MCF 10A (cell line): ENCODE measurements at regions of chr11 and their contacts with region 1.

Region 1: GRCh38 chr11:68297812-68298658 is 14.4 kb upstream of the LRP5 start:
- DNase-seq: peak; percentile 71
- H3K4me3 Mint-ChIP-seq: no peak overlapping the region
- H3K27ac Mint-ChIP-seq: no peak overlapping the region
- H3K4me1 Mint-ChIP-seq: peaks cover 13% of the 10 kb centered on the region
- H3K27me3 Mint-ChIP-seq: no peaks in the 10 kb centered on the region
- CTCF ChIP-seq: peak; percentile 98

Region 2: DNA sequence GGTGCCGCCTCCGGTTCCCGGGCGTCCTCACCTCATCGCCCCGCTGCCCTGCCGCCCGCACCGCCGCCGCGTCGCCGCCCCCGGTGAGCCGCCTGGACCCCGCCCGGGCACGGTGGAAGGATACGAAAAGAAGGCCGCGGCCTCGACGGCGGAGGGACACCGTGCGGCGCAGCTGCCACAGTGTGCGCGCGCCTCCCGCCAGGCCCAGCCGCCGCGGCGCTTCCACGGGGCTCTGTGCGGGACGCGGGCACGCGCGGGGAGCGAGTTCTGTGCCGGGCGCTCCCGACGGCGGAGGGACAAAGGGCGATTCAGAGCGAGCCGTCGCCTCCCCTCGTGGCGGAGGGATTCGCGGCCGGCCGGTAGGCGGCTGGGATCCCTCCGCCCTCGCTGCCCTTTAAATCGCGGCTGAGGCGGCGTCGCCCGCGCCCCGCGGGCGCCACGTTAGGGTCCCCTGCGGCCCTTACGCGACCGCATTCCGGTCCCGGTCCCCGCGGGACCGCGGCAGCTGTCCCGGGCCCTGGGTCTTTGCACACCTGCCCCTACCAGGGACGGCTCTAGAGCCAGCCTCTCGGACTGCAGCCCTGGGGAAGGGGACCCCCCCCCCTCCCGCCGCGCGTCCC is 84.4 kb before region 1 on chr11:
- CTCF ChIA-PET with region 1: interaction called, 8 read pairs
- POLR2A ChIA-PET with region 1: interaction called, 4 read pairs
- intact Hi-C with region 1: loop called (anchors 1 kb)
- DNase-seq: peak; percentile 81
- H3K4me3 Mint-ChIP-seq: peak overlapping the region; percentile 91
- H3K27ac Mint-ChIP-seq: peak overlapping the region; percentile 84
- H3K4me1 Mint-ChIP-seq: peaks cover 36% of the 10 kb centered on the region
- H3K27me3 Mint-ChIP-seq: peaks cover 11% of the 10 kb centered on the region
- CTCF ChIP-seq: no peak

Region 3: GRCh38 chr11:68257475-68258362 is 40.3 kb before region 1 on chr11:
- CTCF ChIA-PET with region 1: interaction called, 150 read pairs
- POLR2A ChIA-PET with region 1: interaction called, 8 read pairs
- intact Hi-C with region 1: loop called (anchors 1 kb)
- DNase-seq: peak; percentile 93
- H3K4me3 Mint-ChIP-seq: no peak overlapping the region
- H3K27ac Mint-ChIP-seq: no peak overlapping the region
- H3K4me1 Mint-ChIP-seq: no peaks in the 10 kb centered on the region
- H3K27me3 Mint-ChIP-seq: no peaks in the 10 kb centered on the region
- CTCF ChIP-seq: peak; percentile 88

Region 4: GRCh38 chr11:68271781-68272608 is 26.0 kb before region 1 on chr11 and contains the start of gene C11orf24:
- CTCF ChIA-PET with region 1: interaction called, 68 read pairs
- POLR2A ChIA-PET with region 1: interaction called, 18 read pairs
- intact Hi-C with region 1: loop called (anchors 1 kb)
- DNase-seq: peak; percentile 92
- H3K4me3 Mint-ChIP-seq: peak within 1 kb of the TSS; percentile 88
- H3K27ac Mint-ChIP-seq: peak within 1 kb of the TSS; percentile 95
- H3K4me1 Mint-ChIP-seq: peaks cover 17% of the 10 kb centered on the region
- H3K27me3 Mint-ChIP-seq: no peaks in the 10 kb centered on the region
- CTCF ChIP-seq: no peak
- total RNA-seq, gene C11orf24: 58.3 and 69.2 TPM in 2 replicates

Region 5: GRCh38 chr11:68312117-68312779 is 14.2 kb after region 1 on chr11 and contains the start of gene LRP5:
- CTCF ChIA-PET with region 1: interaction called, 15 read pairs
- POLR2A ChIA-PET with region 1: interaction called, 8 read pairs
- intact Hi-C with region 1: no loop called
- DNase-seq: no peak
- H3K4me3 Mint-ChIP-seq: peak within 1 kb of the TSS; percentile 87
- H3K27ac Mint-ChIP-seq: peak within 1 kb of the TSS; percentile 88
- H3K4me1 Mint-ChIP-seq: peaks cover 40% of the 10 kb centered on the region
- H3K27me3 Mint-ChIP-seq: no peaks in the 10 kb centered on the region
- CTCF ChIP-seq: no peak
- total RNA-seq, gene LRP5: 31.6 and 32.8 TPM in 2 replicates